ENCODE measurements at regions of chr3 and their contacts with region 1.

Region 1: GRCh38 chr3:11643605-11644087 is at the start of gene VGLL4:
- DNase-seq: peak; percentile 27 to 79 (median 57)
- ATAC-seq: peak; percentile 54
- H3K4me3 ChIP-seq: peak within 1 kb of the TSS; percentile 89
- H3K4me3 Mint-ChIP-seq: peak within 1 kb of the TSS; percentile 98
- H3K27ac ChIP-seq: peak within 1 kb of the TSS; percentile 80 to 89
- H3K27ac Mint-ChIP-seq: peak within 1 kb of the TSS; percentile 98
- H3K4me1 ChIP-seq: peaks cover 22% of the 10 kb centered on the region
- H3K4me1 Mint-ChIP-seq: peaks cover 43% of the 10 kb centered on the region
- H3K27me3 ChIP-seq: no peaks in the 10 kb centered on the region
- H3K27me3 Mint-ChIP-seq: no peaks in the 10 kb centered on the region
- CTCF ChIP-seq: no peak
- total RNA-seq, gene VGLL4: 10.5 to 11.3 TPM

Region 2: GRCh38 chr3:10522646-10523303 is 1120.9 kb before region 1 on chr3:
- CTCF ChIA-PET with region 1: no interaction called
- POLR2A ChIA-PET with region 1: no interaction called
- intact Hi-C with region 1: no loop called
- DNase-seq: peak in 1 of 14 experiments; percentile 12
- ATAC-seq: no peak
- H3K4me3 ChIP-seq: no peak overlapping the region
- H3K4me3 Mint-ChIP-seq: no peak overlapping the region
- H3K27ac ChIP-seq: no peak overlapping the region
- H3K27ac Mint-ChIP-seq: no peak overlapping the region
- H3K4me1 ChIP-seq: no peaks in the 10 kb centered on the region
- H3K4me1 Mint-ChIP-seq: no peaks in the 10 kb centered on the region
- H3K27me3 ChIP-seq: peaks cover 6 to 15% of the 10 kb centered on the region in 2 experiments
- H3K27me3 Mint-ChIP-seq: peaks cover 45% of the 10 kb centered on the region
- CTCF ChIP-seq: no peak

Region 3: DNA sequence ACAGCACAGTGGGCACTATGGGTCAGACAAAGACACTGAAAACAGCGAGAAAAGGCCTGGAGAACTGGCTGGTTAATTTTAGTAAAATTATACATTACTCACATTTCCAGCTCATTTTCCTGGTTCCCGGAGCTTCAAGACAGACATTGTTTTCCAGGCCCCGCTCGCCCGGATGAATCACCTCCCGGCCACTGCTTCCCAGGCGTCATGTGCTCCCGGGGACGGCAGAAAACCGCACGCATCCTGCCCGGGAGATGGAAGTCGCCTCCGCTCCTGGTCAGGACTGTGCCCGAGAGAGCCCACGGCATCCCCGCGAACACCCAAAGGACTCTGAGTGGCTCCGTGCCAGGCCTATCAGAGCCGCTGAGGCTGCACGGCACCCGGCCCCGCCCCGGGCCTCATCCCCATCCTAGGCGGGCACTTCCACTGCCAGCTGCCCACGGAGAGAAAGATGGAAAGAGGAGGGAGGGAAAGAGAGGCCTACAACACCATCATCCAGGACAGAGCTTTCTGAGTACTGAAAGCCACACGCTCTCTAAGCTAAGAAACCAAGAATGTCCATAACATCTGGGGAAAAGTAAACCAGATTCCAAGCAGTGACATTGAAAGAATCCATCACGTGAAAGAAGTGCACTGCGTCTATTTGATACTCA is 75.0 kb before region 1 on chr3:
- CTCF ChIA-PET with region 1: no interaction called
- POLR2A ChIA-PET with region 1: no interaction called
- intact Hi-C with region 1: no loop called
- DNase-seq: no peak
- ATAC-seq: no peak
- H3K4me3 ChIP-seq: no peak overlapping the region
- H3K4me3 Mint-ChIP-seq: no peak overlapping the region
- H3K27ac ChIP-seq: no peak overlapping the region
- H3K27ac Mint-ChIP-seq: no peak overlapping the region
- H3K4me1 ChIP-seq: no peaks in the 10 kb centered on the region
- H3K4me1 Mint-ChIP-seq: no peaks in the 10 kb centered on the region
- H3K27me3 ChIP-seq: no peaks in the 10 kb centered on the region
- H3K27me3 Mint-ChIP-seq: no peaks in the 10 kb centered on the region
- CTCF ChIP-seq: no peak

Region 4: DNA sequence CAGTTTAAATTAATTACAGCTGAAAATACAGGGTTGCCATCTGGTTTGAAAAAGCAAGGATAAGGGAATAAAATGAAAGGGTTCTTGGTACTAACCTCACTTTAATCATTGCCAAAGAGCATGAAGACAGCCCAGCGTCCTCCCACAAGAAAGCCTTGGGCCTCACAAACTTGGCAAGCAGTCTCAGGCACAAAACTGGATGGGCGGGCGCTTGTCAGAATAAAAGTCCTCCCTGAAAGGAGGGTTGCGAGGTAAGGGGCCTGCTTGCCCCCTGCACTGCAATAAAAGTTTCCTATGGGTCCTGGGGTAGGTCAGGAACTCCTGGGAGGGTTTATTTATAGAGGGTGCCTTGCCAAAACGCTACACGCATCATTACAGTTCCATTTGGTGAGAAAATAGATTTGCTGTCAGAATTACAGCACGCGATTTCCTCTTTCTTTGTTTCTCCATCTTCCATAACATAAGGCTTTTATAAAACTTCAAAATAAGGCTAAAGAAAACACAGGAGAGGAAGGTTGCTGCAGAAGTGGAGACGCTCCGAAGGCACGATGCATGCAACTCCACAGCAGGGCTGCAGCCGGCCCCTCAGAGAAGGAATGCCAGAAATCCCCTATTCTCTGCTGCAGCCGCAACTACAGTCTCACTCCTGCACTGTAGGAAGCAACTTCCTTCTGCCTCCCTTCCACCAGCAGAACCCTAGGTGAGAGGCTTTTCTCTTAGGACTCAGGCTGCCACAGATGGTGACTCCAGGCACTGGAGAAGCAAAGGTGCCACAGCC is 61.3 kb before region 1 on chr3:
- CTCF ChIA-PET with region 1: no interaction called
- POLR2A ChIA-PET with region 1: interaction called, 3 read pairs
- intact Hi-C with region 1: loop called (anchors 5 kb)
- DNase-seq: no peak
- ATAC-seq: no peak
- H3K4me3 ChIP-seq: peak overlapping the region; percentile 20
- H3K4me3 Mint-ChIP-seq: peak overlapping the region; percentile 77
- H3K27ac ChIP-seq: no peak overlapping the region
- H3K27ac Mint-ChIP-seq: peak overlapping the region; percentile 29
- H3K4me1 ChIP-seq: peaks cover 17% of the 10 kb centered on the region
- H3K4me1 Mint-ChIP-seq: peaks cover 84% of the 10 kb centered on the region
- H3K27me3 ChIP-seq: no peaks in the 10 kb centered on the region
- H3K27me3 Mint-ChIP-seq: no peaks in the 10 kb centered on the region
- CTCF ChIP-seq: no peak

Region 5: GRCh38 chr3:11626084-11626463 is 17.6 kb before region 1 on chr3:
- CTCF ChIA-PET with region 1: interaction called, 4 read pairs
- POLR2A ChIA-PET with region 1: interaction called, 31 read pairs
- intact Hi-C with region 1: loop called in 1 of 2 experiments (anchors 1 kb)
- DNase-seq: peak in 1 of 14 experiments; percentile 19
- ATAC-seq: no peak
- H3K4me3 ChIP-seq: no peak overlapping the region
- H3K4me3 Mint-ChIP-seq: peak overlapping the region; percentile 26
- H3K27ac ChIP-seq: no peak overlapping the region
- H3K27ac Mint-ChIP-seq: peak overlapping the region; percentile 92
- H3K4me1 ChIP-seq: peaks cover 25% of the 10 kb centered on the region
- H3K4me1 Mint-ChIP-seq: peaks cover 73% of the 10 kb centered on the region
- H3K27me3 ChIP-seq: no peaks in the 10 kb centered on the region
- H3K27me3 Mint-ChIP-seq: no peaks in the 10 kb centered on the region
- CTCF ChIP-seq: no peak